Gastrocnemius medialis (tissue), 4 donors: ENCODE measurements at regions of chr2 and their contacts with region 1.

Region 1: GRCh38 chr2:112254466-112255239 is at the start of gene ZC3H8:
- DNase-seq: peak; percentile 90 to 93
- ATAC-seq: peak; percentile 94 to 96
- H3K4me3 ChIP-seq: peak within 1 kb of the TSS; percentile 84 to 92 (median 88)
- H3K27ac ChIP-seq: peak within 1 kb of the TSS; percentile 92 to 96 (median 92)
- H3K4me1 ChIP-seq: peaks cover 12 to 15% of the 10 kb centered on the region in 2 donors
- H3K27me3 ChIP-seq: no peaks in the 10 kb centered on the region
- CTCF ChIP-seq: no peak
- POLR2A ChIP-seq: peak; percentile 91 to 92
- total RNA-seq, gene ZC3H8: 5.7 to 13.6 (median 8.0) TPM

Region 2: GRCh38 chr2:111135910-111136297 is 1118.7 kb before region 1 on chr2:
- in situ Hi-C with region 1: loop called in 1 of 4 experiments (anchors 25 kb)
- intact Hi-C with region 1: no loop called
- DNase-seq: peak; percentile 53 to 79
- ATAC-seq: peak; percentile 61 to 68
- H3K4me3 ChIP-seq: no peak overlapping the region
- H3K27ac ChIP-seq: peak overlapping the region; percentile 61 to 74 (median 62)
- H3K4me1 ChIP-seq: peaks cover 44 to 67% of the 10 kb centered on the region in 2 donors
- H3K27me3 ChIP-seq: no peaks in the 10 kb centered on the region
- CTCF ChIP-seq: peak; percentile 45 to 70 (median 63)
- POLR2A ChIP-seq: no peak

Region 3: DNA sequence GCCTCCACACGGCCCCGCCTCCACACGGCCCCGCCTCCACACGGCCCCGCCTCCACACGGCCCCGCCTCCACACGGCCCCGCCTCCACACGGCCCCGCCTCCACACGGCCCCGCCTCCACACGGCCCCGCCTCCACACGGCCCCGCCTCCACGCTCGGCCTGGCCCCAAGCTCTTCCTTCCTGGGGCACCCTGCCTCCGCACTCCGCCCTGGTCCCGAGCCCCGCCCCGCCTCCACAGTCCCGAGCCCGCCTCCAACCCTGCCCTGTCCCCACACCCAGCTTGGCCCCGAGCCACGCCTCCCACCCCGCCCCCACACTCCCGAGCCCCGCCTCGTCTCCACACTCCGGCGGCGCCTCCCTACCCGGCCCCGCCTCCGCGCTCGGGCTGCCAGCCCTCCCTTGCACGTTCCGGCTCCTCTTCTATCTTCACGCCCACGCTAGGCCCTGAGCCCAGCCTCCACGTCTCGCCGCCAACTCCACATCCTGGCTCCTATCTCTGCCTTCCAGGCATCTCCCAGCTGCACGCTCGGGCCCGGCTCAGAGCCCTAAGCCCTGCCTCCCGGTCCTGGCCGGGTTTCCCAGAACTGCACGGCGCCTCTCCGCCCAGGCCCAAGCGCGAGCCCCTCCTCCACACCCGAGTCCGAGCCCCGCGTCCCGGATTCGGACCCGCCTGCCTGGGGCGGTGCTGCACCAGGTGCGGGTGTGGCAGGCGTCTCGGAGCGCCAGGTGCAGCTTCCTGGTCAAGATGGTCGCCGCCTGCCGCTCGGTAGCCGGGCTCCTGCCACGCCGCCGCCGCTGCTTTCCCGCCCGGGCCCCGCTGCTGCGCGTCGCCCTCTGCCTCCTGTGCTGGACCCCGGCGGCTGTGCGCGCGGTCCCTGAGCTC is 199.6 kb before region 1 on chr2 and contains the start of gene TMEM87B:
- in situ Hi-C with region 1: loop called in 1 of 4 experiments (anchors 10 kb)
- intact Hi-C with region 1: loop called (anchors 1 kb)
- DNase-seq: peak; percentile 96 to 97
- ATAC-seq: peak; percentile 77 to 78
- H3K4me3 ChIP-seq: peak within 1 kb of the TSS; percentile 70 to 95 (median 84)
- H3K27ac ChIP-seq: peak within 1 kb of the TSS; percentile 87 to 96 (median 94)
- H3K4me1 ChIP-seq: peaks cover 13 to 18% of the 10 kb centered on the region in 2 donors
- H3K27me3 ChIP-seq: no peaks in the 10 kb centered on the region
- CTCF ChIP-seq: no peak
- POLR2A ChIP-seq: peak; percentile 36 to 58
- total RNA-seq, gene TMEM87B: 2.6 to 5.0 (median 3.1) TPM

Region 4: GRCh38 chr2:112121682-112122254 is 132.9 kb before region 1 on chr2:
- in situ Hi-C with region 1: no loop called
- intact Hi-C with region 1: no loop called
- DNase-seq: no peak
- ATAC-seq: no peak
- H3K4me3 ChIP-seq: no peak overlapping the region
- H3K27ac ChIP-seq: no peak overlapping the region
- H3K4me1 ChIP-seq: no peaks in the 10 kb centered on the region
- H3K27me3 ChIP-seq: no peaks in the 10 kb centered on the region
- CTCF ChIP-seq: peak in 4 of 5 experiments; percentile 39 to 57 (median 53)
- POLR2A ChIP-seq: no peak

Region 5: DNA sequence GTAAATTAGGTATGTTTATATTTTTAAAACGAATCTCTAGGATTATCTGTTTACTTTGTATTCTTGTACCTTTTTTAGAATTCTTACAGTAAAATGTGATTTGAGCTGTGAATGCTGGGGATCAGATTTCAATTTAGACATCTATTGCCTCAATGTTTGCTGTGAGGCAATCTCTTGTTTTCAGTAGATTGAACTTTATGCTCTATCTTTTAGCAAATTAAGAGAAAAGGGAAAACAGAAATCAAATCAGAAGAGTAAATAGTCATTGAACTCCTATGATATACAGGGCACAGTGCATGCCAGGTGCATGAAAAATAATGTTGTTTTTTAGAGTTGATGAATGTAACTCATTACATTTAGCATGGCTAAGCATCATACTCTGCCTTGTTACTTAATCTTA is 60.2 kb after region 1 on chr2:
- in situ Hi-C with region 1: no loop called
- intact Hi-C with region 1: loop called (anchors 5 kb)
- DNase-seq: no peak
- ATAC-seq: no peak
- H3K4me3 ChIP-seq: no peak overlapping the region
- H3K27ac ChIP-seq: no peak overlapping the region
- H3K4me1 ChIP-seq: no peaks in the 10 kb centered on the region
- H3K27me3 ChIP-seq: no peaks in the 10 kb centered on the region
- CTCF ChIP-seq: no peak
- POLR2A ChIP-seq: no peak

Region 6: GRCh38 chr2:112481050-112481527 is 226.4 kb after region 1 on chr2:
- in situ Hi-C with region 1: loop called in 1 of 4 experiments (anchors 25 kb)
- intact Hi-C with region 1: no loop called
- DNase-seq: peak; percentile 75
- ATAC-seq: peak; percentile 80 to 81
- H3K4me3 ChIP-seq: peak overlapping the region; percentile 70 to 99 (median 90)
- H3K27ac ChIP-seq: peak overlapping the region; percentile 89 to 94 (median 91)
- H3K4me1 ChIP-seq: peaks cover 16 to 18% of the 10 kb centered on the region in 2 donors
- H3K27me3 ChIP-seq: no peaks in the 10 kb centered on the region
- CTCF ChIP-seq: peak; percentile 58 to 89 (median 74)
- POLR2A ChIP-seq: no peak

Region 7: DNA sequence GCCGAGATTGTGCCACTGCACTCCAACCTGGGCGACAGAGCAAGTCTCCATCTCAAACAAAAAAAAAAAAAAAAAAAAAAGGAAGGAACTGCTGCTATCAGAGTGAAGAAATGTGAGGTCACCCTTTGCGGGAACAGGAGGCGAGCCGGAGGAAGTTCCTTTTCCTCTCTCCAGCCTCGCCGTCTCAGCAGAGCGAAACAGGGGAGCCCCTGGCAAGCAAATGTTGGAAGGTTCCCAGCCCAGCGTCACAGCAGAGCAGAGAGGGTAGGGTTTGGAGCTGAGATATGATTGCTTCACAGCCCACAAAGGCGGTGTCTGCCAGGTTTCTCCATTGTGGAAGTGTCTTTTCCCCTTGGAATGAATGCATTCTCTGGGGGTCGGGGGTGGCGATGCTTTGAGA is 419.6 kb after region 1 on chr2:
- in situ Hi-C with region 1: no loop called
- intact Hi-C with region 1: no loop called
- DNase-seq: peak; percentile 24 to 43
- ATAC-seq: peak in 1 of 2 donors; percentile 55
- H3K4me3 ChIP-seq: no peak overlapping the region
- H3K27ac ChIP-seq: no peak overlapping the region
- H3K4me1 ChIP-seq: peaks cover under 1 to 1% of the 10 kb centered on the region in 2 donors
- H3K27me3 ChIP-seq: no peaks in the 10 kb centered on the region
- CTCF ChIP-seq: no peak
- POLR2A ChIP-seq: no peak